CD14-positive monocyte (primary cell): ENCODE measurements at regions of chr7 and their contacts with region 1.

Region 1: GRCh38 chr7:151744656-151745638 is 132.0 kb downstream of the PRKAG2 start:
- DNase-seq: peak; percentile 92 to 99 (median 93)
- H3K4me3 ChIP-seq: no peak overlapping the region
- H3K4me3 Mint-ChIP-seq: peak overlapping the region; percentile 32 to 50
- H3K27ac ChIP-seq: peak overlapping the region; percentile 36 to 63
- H3K27ac Mint-ChIP-seq: peak overlapping the region; percentile 70 to 96 (median 92)
- H3K4me1 ChIP-seq: peaks cover 40 to 41% of the 10 kb centered on the region in 2 donors
- H3K4me1 Mint-ChIP-seq: peaks cover 52% of the 10 kb centered on the region
- H3K27me3 ChIP-seq: no peaks in the 10 kb centered on the region
- H3K27me3 Mint-ChIP-seq: peaks cover 0 to 3% (median 2%) of the 10 kb centered on the region in 3 donors
- CTCF ChIP-seq: peak; percentile 40

Region 2: DNA sequence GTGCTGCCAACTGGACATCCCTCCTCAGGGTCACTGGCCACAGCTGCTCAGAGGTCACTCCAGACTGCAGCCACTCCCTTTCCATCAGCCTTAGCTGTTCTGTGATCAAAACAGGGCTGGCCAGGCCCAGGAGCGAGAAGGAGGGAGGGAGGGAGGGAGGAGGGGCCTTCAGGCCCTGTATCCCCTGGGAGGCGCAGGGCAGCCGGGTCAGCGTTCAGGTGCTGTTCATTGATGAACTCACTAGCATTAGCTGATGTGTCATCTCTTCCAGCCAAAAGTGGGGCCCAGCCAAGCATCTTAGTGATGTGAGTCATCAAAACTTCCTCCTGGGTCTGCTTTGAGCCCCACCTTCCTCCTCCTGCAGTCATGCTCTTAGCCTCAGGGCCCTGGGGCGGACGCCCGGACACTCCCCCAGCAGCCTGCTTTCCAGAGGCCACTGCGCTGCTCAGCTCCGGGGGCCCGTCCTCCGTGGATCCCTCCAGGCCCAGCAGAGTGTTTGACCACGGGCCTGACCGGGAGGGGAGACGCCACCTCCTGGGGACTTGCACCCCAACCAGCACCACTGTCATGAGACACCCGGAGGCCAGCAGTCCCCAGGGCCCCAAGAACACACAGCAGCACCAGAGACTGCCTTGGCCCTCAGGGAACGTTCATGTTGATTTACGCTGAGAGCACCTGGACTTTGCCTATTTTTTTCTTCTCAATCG is 17.2 kb before region 1 on chr7:
- intact Hi-C with region 1: loop called in 1 of 2 experiments (anchors 1 kb)
- DNase-seq: peak; percentile 83 to 94 (median 93)
- H3K4me3 ChIP-seq: no peak overlapping the region
- H3K4me3 Mint-ChIP-seq: no peak overlapping the region
- H3K27ac ChIP-seq: peak overlapping the region; percentile 32 to 71
- H3K27ac Mint-ChIP-seq: peak overlapping the region in 6 of 7 donors; percentile 69 to 92 (median 86)
- H3K4me1 ChIP-seq: peaks cover 15 to 19% of the 10 kb centered on the region in 2 donors
- H3K4me1 Mint-ChIP-seq: peaks cover 24% of the 10 kb centered on the region
- H3K27me3 ChIP-seq: no peaks in the 10 kb centered on the region
- H3K27me3 Mint-ChIP-seq: peaks cover 0 to 5% (median 2%) of the 10 kb centered on the region in 3 donors
- CTCF ChIP-seq: no peak

Region 3: DNA sequence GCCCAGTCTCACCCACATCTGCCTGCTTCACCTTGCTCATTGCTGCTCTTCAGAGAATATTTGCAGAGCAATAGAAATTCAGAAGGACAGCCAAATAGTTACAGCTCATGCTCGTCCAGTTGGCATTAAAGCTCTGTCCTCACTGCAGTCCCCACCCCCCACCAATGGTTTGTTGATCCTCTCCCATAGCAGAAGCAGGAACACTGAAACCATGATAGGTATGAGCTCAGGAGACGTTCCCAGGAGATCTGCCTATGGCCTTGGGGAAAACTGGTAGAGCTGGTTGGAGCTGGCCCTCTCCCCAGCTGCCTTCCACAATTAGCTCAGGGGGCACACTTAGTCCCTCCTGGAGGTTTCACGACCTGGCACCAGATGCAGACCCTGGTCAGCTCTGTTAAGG is 759.4 kb after region 1 on chr7:
- intact Hi-C with region 1: no loop called
- DNase-seq: no peak
- H3K4me3 ChIP-seq: no peak overlapping the region
- H3K4me3 Mint-ChIP-seq: no peak overlapping the region
- H3K27ac ChIP-seq: no peak overlapping the region
- H3K27ac Mint-ChIP-seq: no peak overlapping the region
- H3K4me1 ChIP-seq: no peaks in the 10 kb centered on the region
- H3K4me1 Mint-ChIP-seq: no peaks in the 10 kb centered on the region
- H3K27me3 ChIP-seq: no peaks in the 10 kb centered on the region
- H3K27me3 Mint-ChIP-seq: peaks cover 0 to 3% (median 0%) of the 10 kb centered on the region in 3 donors
- CTCF ChIP-seq: no peak